Calu3 (cell line): ENCODE measurements at regions of chr5 and their contacts with region 1.

Region 1: GRCh38 chr5:1161833-1162229 is 39.6 kb upstream of the SLC6A19 start:
- DNase-seq: peak; percentile 89
- H3K4me3 Mint-ChIP-seq: peak overlapping the region; percentile 7
- H3K27ac Mint-ChIP-seq: peak overlapping the region; percentile 37
- H3K4me1 Mint-ChIP-seq: peaks cover 40% of the 10 kb centered on the region
- H3K27me3 Mint-ChIP-seq: peaks cover 35% of the 10 kb centered on the region
- CTCF ChIP-seq: no peak

Region 2: GRCh38 chr5:1125030-1125357 is 36.8 kb before region 1 on chr5:
- CTCF ChIA-PET with region 1: interaction called, 7 read pairs
- intact Hi-C with region 1: loop called (anchors 5 kb)
- DNase-seq: no peak
- H3K4me3 Mint-ChIP-seq: no peak overlapping the region
- H3K27ac Mint-ChIP-seq: no peak overlapping the region
- H3K4me1 Mint-ChIP-seq: peaks cover 30% of the 10 kb centered on the region
- H3K27me3 Mint-ChIP-seq: no peaks in the 10 kb centered on the region
- CTCF ChIP-seq: no peak

Region 3: GRCh38 chr5:1140171-1140817 is 21.5 kb before region 1 on chr5:
- CTCF ChIA-PET with region 1: interaction called, 10 read pairs
- intact Hi-C with region 1: no loop called
- DNase-seq: peak; percentile 94
- H3K4me3 Mint-ChIP-seq: peak overlapping the region; percentile 36
- H3K27ac Mint-ChIP-seq: peak overlapping the region; percentile 65
- H3K4me1 Mint-ChIP-seq: peaks cover 18% of the 10 kb centered on the region
- H3K27me3 Mint-ChIP-seq: no peaks in the 10 kb centered on the region
- CTCF ChIP-seq: peak; percentile 93

Region 4: DNA sequence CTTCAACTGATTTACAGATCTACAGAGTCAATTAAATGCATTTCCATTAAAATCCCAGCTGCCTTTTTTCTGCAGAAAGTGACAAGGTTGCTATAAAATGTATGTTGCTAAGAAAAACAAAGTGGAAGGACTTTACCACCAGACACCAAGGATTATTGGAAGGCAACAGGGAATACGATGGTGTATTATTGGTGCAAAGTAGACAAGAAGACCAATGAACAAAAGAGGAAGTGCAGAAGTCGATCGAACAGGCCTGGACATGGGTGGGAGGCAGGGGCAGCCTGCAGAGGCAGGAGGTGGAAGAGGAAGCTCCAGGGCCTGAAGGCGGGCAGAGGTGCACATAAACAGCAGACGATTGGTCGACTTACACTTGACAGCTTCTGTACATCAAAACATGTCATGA is 29.0 kb after region 1 on chr5:
- CTCF ChIA-PET with region 1: no interaction called
- intact Hi-C with region 1: no loop called
- DNase-seq: no peak
- H3K4me3 Mint-ChIP-seq: no peak overlapping the region
- H3K27ac Mint-ChIP-seq: no peak overlapping the region
- H3K4me1 Mint-ChIP-seq: peaks cover 8% of the 10 kb centered on the region
- H3K27me3 Mint-ChIP-seq: peaks cover 65% of the 10 kb centered on the region
- CTCF ChIP-seq: no peak